ENCODE measurements at regions of chr20 and their contacts with region 1.

Region 1: DNA sequence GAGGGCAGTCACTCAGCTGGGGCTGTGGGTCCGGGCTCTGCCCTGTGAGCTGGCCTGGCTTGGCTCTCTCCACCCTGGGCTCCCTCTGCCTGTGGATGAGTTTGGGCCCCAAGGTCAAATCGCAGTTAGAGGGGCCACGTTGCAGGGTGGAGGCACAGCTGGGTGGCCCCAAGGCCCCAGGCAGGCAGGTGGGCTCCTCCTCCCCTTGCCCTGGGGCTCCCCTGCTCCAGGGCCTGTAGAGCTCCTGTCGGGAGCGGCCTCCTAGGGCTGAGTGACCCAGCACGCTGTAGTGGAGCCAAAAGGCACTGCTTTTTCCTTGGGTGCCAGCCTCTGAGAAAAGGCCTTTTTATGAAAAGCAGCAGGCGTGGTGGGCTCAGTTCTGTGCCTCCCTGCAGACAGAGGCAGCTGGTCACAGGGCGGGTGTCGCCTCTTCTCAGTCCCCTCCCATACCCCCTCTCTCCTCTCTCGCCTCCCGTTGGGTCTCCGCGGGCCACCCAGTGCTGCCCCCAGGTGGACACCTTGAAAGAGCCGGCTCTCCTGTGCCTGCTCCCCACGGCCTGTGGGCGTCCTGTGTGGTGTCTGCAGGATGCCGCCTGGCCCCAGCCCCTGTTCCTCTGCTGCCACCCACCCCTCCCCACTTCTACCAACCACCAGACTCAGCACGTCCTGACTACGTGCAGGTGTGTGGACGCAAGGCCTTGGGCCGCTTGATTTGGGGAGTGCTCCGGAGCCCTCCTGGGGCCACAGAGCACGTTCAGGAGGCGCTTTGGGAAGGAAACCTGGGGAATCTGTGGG is 13.2 kb downstream of the SS18L1 start:
- DNase-seq: peak; percentile 46
- ATAC-seq: peak; percentile 80
- H3K4me3 ChIP-seq: no peak overlapping the region
- H3K27ac ChIP-seq: peak overlapping the region; percentile 63
- H3K4me1 ChIP-seq: peaks cover 46 to 69% of the 10 kb centered on the region in 2 experiments
- H3K27me3 ChIP-seq: no peaks in the 10 kb centered on the region
- CTCF ChIP-seq: peak in 2 of 3 experiments; percentile 79 to 85; a peak in 5 of 6 replicates
- POLR2A ChIP-seq: no peak
- RAD21 ChIP-seq: no peak; the same call in none of the 2 replicates

Region 2: DNA sequence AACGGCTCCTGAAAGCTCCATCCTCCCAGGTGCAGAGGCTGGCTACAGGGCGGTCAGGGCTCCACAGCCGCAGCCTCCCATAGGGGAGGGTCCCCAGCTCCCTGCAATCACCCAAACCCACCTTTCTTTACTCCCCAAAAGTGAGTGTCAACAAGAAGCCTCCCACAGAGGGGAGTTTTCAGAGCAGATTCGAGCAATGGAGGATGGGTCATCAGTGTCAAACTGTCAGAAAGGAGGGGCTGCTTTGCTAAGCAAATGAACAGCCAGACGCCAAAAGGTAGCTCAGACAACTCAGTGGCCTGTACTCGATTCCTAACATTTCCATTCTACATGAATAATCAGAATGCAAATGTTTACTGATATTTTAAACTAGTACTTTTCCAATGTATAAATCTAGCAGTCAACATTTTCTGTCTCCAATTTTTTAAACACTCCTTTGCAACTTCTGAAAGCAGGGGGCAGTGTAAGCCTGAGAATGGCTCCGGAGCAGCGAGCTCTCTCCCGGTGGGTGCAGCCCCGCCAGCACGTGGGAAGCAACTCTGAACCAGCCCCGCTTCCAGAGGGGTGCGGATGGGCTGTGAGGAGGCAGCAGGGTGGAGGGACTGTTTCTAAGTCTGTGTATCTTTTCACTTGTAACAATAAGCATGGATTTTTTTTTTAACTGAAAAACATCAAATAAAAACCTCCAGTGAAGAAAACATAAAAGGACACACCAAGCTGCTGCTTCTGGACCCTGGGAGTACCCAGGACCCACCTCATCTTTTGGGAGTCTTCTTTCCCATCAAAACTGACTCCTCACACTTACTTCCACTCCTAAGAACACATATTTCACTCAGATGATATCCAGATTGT is 146.0 kb before region 1 on chr20:
- CTCF ChIA-PET with region 1: interaction called, 8 read pairs
- POLR2A ChIA-PET with region 1: no interaction called
- RAD21 ChIA-PET with region 1: no interaction called
- intact Hi-C with region 1: loop called (anchors 1 kb)
- DNase-seq: peak; percentile 10
- ATAC-seq: peak; percentile 82
- H3K4me3 ChIP-seq: no peak overlapping the region
- H3K27ac ChIP-seq: no peak overlapping the region
- H3K4me1 ChIP-seq: no peaks in the 10 kb centered on the region
- H3K27me3 ChIP-seq: no peaks in the 10 kb centered on the region
- CTCF ChIP-seq: peak; percentile 57 to 81 (median 74); a peak in 5 of 6 replicates
- POLR2A ChIP-seq: no peak
- RAD21 ChIP-seq: peak; percentile 88

Region 3: GRCh38 chr20:62182613-62183425 is 26.0 kb after region 1 on chr20 and contains the start of gene MTG2:
- CTCF ChIA-PET with region 1: no interaction called
- POLR2A ChIA-PET with region 1: no interaction called
- RAD21 ChIA-PET with region 1: no interaction called
- intact Hi-C with region 1: loop called (anchors 2 kb)
- DNase-seq: peak; percentile 89
- ATAC-seq: peak; percentile 95
- H3K4me3 ChIP-seq: peak within 1 kb of the TSS; percentile 68 to 84
- H3K27ac ChIP-seq: peak within 1 kb of the TSS; percentile 92
- H3K4me1 ChIP-seq: peaks cover 6 to 17% of the 10 kb centered on the region in 2 experiments; a peak in 3 of 4 replicates
- H3K27me3 ChIP-seq: no peaks in the 10 kb centered on the region
- CTCF ChIP-seq: no peak
- POLR2A ChIP-seq: peak; percentile 87
- RAD21 ChIP-seq: peak; percentile 20; the same call in 1 of the 2 replicates
- total RNA-seq, gene MTG2: 43.3 TPM

Measured in HCT116 (cell line).